MCF 10A (cell line): ENCODE measurements at regions of chr2 and their contacts with region 1.

Region 1: DNA sequence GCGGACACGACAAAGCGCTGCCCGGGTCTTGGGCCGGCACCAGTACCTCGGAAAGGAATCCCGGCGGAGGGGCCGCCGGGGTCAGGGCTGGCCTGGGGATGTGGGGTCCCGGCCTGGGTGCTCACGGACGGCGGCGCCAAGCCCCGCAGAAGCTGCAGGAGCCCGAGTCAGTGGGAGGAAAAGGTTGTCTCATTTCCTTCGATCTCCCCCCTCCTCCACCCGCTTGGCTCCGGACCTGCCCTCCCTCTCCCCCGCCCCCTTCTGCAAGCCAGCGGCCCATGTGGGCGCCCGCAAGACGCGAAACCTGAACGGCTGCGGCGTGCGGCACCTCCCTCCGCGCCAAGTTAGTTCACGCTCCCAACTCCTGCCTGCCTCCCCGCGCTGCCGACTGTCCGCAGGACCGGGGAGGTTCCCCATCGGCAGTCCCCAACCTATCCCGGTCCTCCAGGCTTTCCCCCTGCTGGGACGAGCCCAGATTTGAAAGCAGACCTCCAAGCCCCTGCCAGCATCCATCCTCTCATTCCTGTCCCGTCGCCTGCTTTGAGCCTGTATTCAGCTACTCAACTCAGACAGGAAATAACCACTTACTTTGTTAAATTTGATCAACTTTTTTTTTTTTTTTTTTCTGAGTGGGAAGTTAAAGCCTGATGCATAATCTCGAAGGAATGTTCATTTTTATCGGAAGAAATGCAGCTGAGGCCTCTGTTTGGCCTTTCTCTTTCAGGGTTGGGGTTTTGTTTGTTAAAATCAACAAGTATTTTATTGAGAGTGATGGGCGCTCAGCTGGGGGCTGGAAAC is at the start of gene EVA1A:
- DNase-seq: peak; percentile 58
- H3K4me3 Mint-ChIP-seq: peak within 1 kb of the TSS; percentile 92
- H3K27ac Mint-ChIP-seq: peak within 1 kb of the TSS; percentile 46
- H3K4me1 Mint-ChIP-seq: peaks cover 28% of the 10 kb centered on the region
- H3K27me3 Mint-ChIP-seq: no peaks in the 10 kb centered on the region
- CTCF ChIP-seq: no peak
- total RNA-seq, gene EVA1A: 7.6 and 14.4 TPM in 2 replicates

Region 2: DNA sequence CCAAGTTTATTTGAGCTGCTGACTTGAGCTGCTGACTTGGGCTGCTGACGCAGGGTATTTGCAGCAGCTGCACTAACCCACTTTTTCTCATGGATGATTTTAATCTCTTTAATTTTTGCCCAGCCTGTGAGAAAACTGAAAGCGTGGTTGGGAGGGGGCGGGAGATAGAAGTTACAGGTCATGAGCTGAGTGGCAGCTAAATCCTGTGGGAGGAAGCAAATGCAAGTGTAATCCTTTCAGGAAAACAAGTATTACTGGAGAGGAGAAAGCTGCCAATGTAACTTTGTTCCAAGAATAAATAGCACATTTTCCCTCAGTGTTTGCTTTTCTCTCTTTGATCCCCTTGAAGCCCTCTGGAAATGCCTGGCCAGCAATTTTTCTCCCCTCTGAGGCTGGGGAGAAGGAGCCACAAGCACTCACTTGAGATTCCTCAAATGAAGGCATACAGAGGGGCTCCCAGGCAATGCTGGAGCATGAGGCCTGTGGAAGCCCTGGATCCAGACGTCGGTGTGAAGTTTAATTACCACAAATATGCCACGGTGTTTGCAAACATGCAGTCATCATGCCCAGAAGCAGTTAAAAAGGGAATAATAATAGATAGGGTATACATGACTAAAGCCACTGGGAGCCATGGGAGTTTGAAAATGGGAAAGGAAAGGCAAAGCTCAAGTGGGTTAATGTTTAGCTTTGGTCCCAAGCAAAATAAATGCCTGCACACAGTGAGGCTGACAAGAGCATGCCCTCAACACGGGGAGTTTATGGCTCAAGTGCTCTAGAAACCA is 10.2 kb after region 1 on chr2:
- CTCF ChIA-PET with region 1: interaction called, 30 read pairs
- POLR2A ChIA-PET with region 1: interaction called, 33 read pairs
- intact Hi-C with region 1: no loop called
- DNase-seq: no peak
- H3K4me3 Mint-ChIP-seq: no peak overlapping the region
- H3K27ac Mint-ChIP-seq: no peak overlapping the region
- H3K4me1 Mint-ChIP-seq: peaks cover 21% of the 10 kb centered on the region
- H3K27me3 Mint-ChIP-seq: no peaks in the 10 kb centered on the region
- CTCF ChIP-seq: no peak

Region 3: DNA sequence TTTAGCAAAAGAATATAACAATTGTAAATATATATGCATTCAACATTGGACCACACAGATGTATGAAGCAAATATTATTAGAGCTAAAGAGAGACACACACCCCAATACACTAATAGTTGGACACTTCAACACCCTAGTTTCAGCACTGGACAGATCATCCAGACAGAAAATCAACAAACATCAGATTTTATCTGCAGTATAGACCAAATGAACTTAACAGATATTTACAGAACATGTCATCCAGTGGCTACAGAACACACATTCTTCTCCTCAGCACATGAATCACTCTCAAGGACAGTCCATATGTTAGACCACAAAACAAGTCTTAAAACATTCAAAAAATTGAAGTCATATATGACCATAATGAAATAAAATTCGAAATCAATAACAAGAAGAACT is 21.9 kb after region 1 on chr2:
- CTCF ChIA-PET with region 1: interaction called, 10 read pairs
- POLR2A ChIA-PET with region 1: interaction called, 4 read pairs
- intact Hi-C with region 1: no loop called
- DNase-seq: no peak
- H3K4me3 Mint-ChIP-seq: no peak overlapping the region
- H3K27ac Mint-ChIP-seq: no peak overlapping the region
- H3K4me1 Mint-ChIP-seq: no peaks in the 10 kb centered on the region
- H3K27me3 Mint-ChIP-seq: no peaks in the 10 kb centered on the region
- CTCF ChIP-seq: no peak

Region 4: GRCh38 chr2:75592028-75592427 is 31.1 kb after region 1 on chr2:
- CTCF ChIA-PET with region 1: interaction called, 15 read pairs
- POLR2A ChIA-PET with region 1: interaction called, 17 read pairs
- intact Hi-C with region 1: no loop called
- DNase-seq: peak; percentile 90
- H3K4me3 Mint-ChIP-seq: no peak overlapping the region
- H3K27ac Mint-ChIP-seq: peak overlapping the region; percentile 72
- H3K4me1 Mint-ChIP-seq: peaks cover 48% of the 10 kb centered on the region
- H3K27me3 Mint-ChIP-seq: no peaks in the 10 kb centered on the region
- CTCF ChIP-seq: no peak

Region 5: GRCh38 chr2:75614056-75614710 is 53.2 kb after region 1 on chr2:
- CTCF ChIA-PET with region 1: interaction called, 159 read pairs
- POLR2A ChIA-PET with region 1: interaction called, 14 read pairs
- intact Hi-C with region 1: loop called (anchors 1 kb)
- DNase-seq: peak; percentile 88
- H3K4me3 Mint-ChIP-seq: peak overlapping the region; percentile 0
- H3K27ac Mint-ChIP-seq: peak overlapping the region; percentile 55
- H3K4me1 Mint-ChIP-seq: peaks cover 17% of the 10 kb centered on the region
- H3K27me3 Mint-ChIP-seq: no peaks in the 10 kb centered on the region
- CTCF ChIP-seq: no peak

Region 6: GRCh38 chr2:75627895-75628504 is 67.0 kb after region 1 on chr2:
- CTCF ChIA-PET with region 1: interaction called, 7 read pairs
- POLR2A ChIA-PET with region 1: no interaction called
- intact Hi-C with region 1: loop called (anchors 1 kb)
- DNase-seq: peak; percentile 79
- H3K4me3 Mint-ChIP-seq: no peak overlapping the region
- H3K27ac Mint-ChIP-seq: no peak overlapping the region
- H3K4me1 Mint-ChIP-seq: peaks cover 7% of the 10 kb centered on the region
- H3K27me3 Mint-ChIP-seq: no peaks in the 10 kb centered on the region
- CTCF ChIP-seq: peak; percentile 90

Region 7: DNA sequence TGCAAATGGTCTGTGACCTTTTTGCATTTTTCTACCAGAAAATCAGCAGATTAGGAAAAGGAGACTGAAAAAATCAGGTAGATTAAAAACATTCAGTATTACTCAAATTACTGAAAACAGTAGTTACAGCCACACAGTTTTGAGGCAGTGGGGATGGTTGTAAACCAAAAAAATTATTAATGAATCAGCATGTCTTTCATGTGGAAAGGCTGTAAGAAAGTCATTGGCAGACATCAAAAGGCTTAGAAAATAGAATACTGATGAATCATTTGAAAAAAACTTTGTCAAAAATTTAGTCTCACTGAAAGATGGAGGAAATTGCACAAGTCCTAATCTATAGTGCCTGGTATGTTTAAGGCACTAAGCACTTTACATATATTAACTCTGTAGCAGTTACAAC is 283.7 kb after region 1 on chr2:
- CTCF ChIA-PET with region 1: no interaction called
- POLR2A ChIA-PET with region 1: no interaction called
- intact Hi-C with region 1: no loop called
- DNase-seq: peak; percentile 38
- H3K4me3 Mint-ChIP-seq: no peak overlapping the region
- H3K27ac Mint-ChIP-seq: no peak overlapping the region
- H3K4me1 Mint-ChIP-seq: peaks cover 15% of the 10 kb centered on the region
- H3K27me3 Mint-ChIP-seq: no peaks in the 10 kb centered on the region
- CTCF ChIP-seq: no peak